T-cell (primary cell): ENCODE measurements at regions of chr3 and their contacts with region 1.

Region 1: GRCh38 chr3:4722103-4722502 is 229.0 kb downstream of the ITPR1 start:
- DNase-seq: peak in 1 of 35 experiments; percentile 47
- ATAC-seq: peak; percentile 50 to 74 (median 66)
- H3K4me3 ChIP-seq: no peak overlapping the region
- H3K4me3 Mint-ChIP-seq: no peak overlapping the region
- H3K27ac ChIP-seq: no peak overlapping the region
- H3K27ac Mint-ChIP-seq: peak overlapping the region in 1 of 2 donors; percentile 29
- H3K4me1 ChIP-seq: no peaks in the 10 kb centered on the region
- H3K4me1 Mint-ChIP-seq: peaks cover 10 to 15% (median 11%) of the 10 kb centered on the region in 3 donors
- H3K27me3 ChIP-seq: no peaks in the 10 kb centered on the region
- H3K27me3 Mint-ChIP-seq: no peaks in the 10 kb centered on the region

Region 2: GRCh38 chr3:4693620-4694019 is 28.5 kb before region 1 on chr3:
- CTCF ChIA-PET with region 1: no interaction called
- POLR2A ChIA-PET with region 1: no interaction called
- DNase-seq: no peak
- ATAC-seq: no peak
- H3K4me3 ChIP-seq: no peak overlapping the region
- H3K4me3 Mint-ChIP-seq: no peak overlapping the region
- H3K27ac ChIP-seq: no peak overlapping the region
- H3K27ac Mint-ChIP-seq: no peak overlapping the region
- H3K4me1 ChIP-seq: no peaks in the 10 kb centered on the region
- H3K4me1 Mint-ChIP-seq: no peaks in the 10 kb centered on the region
- H3K27me3 ChIP-seq: no peaks in the 10 kb centered on the region
- H3K27me3 Mint-ChIP-seq: no peaks in the 10 kb centered on the region

Region 3: DNA sequence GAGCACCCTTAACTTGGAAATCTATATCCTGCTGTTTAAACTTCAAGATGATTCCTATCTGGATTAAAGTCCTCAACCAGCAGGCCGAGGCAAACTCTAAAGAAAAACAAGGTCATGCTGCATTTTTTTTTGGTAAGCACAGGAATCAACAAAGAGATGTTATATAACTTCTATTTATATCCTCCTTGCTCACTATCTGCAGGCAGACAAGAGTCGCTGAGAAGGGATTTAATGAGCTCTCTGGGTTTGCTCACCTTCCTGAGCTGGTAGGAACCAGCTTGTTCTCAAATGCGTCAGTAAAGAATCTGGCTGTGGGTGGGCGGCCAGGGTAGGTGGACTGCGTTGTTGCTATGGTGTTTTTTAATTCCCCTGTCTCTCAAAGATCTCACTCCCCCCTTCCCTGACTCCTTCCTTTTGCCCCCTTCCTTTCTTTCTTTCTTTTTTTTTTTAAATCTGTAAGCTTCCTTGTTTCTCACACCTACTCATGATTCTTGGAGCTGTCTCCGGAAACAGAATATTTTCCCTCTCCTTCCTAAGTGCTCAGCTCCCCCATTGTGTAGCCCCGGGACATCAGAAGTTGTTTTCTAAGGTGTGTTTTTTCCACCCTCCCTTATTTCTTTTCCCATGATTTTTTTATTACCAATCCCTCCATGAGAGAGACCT is 28.3 kb after region 1 on chr3:
- CTCF ChIA-PET with region 1: interaction called in 1 of 2 experiments, 12 read pairs
- POLR2A ChIA-PET with region 1: no interaction called
- DNase-seq: peak in 8 of 35 experiments; percentile 10 to 47 (median 18)
- ATAC-seq: peak in 2 of 4 experiments; percentile 55 to 86
- H3K4me3 ChIP-seq: no peak overlapping the region
- H3K4me3 Mint-ChIP-seq: peak overlapping the region in 1 of 3 donors; percentile 38
- H3K27ac ChIP-seq: peak overlapping the region; percentile 53
- H3K27ac Mint-ChIP-seq: peak overlapping the region; percentile 71 to 83
- H3K4me1 ChIP-seq: peaks cover 0 to 17% of the 10 kb centered on the region in 2 experiments
- H3K4me1 Mint-ChIP-seq: peaks cover 34 to 39% (median 38%) of the 10 kb centered on the region in 3 donors
- H3K27me3 ChIP-seq: no peaks in the 10 kb centered on the region
- H3K27me3 Mint-ChIP-seq: no peaks in the 10 kb centered on the region

Region 4: GRCh38 chr3:4963669-4964589 is 241.8 kb after region 1 on chr3:
- CTCF ChIA-PET with region 1: interaction called in 1 of 2 experiments, 11 read pairs
- POLR2A ChIA-PET with region 1: no interaction called
- DNase-seq: no peak
- ATAC-seq: no peak
- H3K4me3 ChIP-seq: no peak overlapping the region
- H3K4me3 Mint-ChIP-seq: no peak overlapping the region
- H3K27ac ChIP-seq: no peak overlapping the region
- H3K27ac Mint-ChIP-seq: peak overlapping the region in 1 of 2 donors; percentile 63
- H3K4me1 ChIP-seq: peaks cover 2 to 15% of the 10 kb centered on the region in 2 experiments
- H3K4me1 Mint-ChIP-seq: peaks cover 23 to 32% (median 23%) of the 10 kb centered on the region in 3 donors
- H3K27me3 ChIP-seq: no peaks in the 10 kb centered on the region
- H3K27me3 Mint-ChIP-seq: no peaks in the 10 kb centered on the region

Region 5: GRCh38 chr3:5057857-5058324 is 335.8 kb after region 1 on chr3:
- CTCF ChIA-PET with region 1: interaction called, 6 to 19 read pairs
- POLR2A ChIA-PET with region 1: no interaction called
- DNase-seq: peak; percentile 29 to 87 (median 66)
- ATAC-seq: peak; percentile 88 to 93 (median 92)
- H3K4me3 ChIP-seq: no peak overlapping the region
- H3K4me3 Mint-ChIP-seq: no peak overlapping the region
- H3K27ac ChIP-seq: no peak overlapping the region
- H3K27ac Mint-ChIP-seq: no peak overlapping the region
- H3K4me1 ChIP-seq: no peaks in the 10 kb centered on the region
- H3K4me1 Mint-ChIP-seq: peaks cover 0 to 8% (median 5%) of the 10 kb centered on the region in 3 donors
- H3K27me3 ChIP-seq: peaks cover 0 to under 1% of the 10 kb centered on the region in 2 experiments
- H3K27me3 Mint-ChIP-seq: peaks cover 2 to 6% of the 10 kb centered on the region in 2 donors